Dorsolateral prefrontal cortex (tissue), 120 donors: ENCODE measurements at regions of chr12 and their contacts with region 1.

Region 1: DNA sequence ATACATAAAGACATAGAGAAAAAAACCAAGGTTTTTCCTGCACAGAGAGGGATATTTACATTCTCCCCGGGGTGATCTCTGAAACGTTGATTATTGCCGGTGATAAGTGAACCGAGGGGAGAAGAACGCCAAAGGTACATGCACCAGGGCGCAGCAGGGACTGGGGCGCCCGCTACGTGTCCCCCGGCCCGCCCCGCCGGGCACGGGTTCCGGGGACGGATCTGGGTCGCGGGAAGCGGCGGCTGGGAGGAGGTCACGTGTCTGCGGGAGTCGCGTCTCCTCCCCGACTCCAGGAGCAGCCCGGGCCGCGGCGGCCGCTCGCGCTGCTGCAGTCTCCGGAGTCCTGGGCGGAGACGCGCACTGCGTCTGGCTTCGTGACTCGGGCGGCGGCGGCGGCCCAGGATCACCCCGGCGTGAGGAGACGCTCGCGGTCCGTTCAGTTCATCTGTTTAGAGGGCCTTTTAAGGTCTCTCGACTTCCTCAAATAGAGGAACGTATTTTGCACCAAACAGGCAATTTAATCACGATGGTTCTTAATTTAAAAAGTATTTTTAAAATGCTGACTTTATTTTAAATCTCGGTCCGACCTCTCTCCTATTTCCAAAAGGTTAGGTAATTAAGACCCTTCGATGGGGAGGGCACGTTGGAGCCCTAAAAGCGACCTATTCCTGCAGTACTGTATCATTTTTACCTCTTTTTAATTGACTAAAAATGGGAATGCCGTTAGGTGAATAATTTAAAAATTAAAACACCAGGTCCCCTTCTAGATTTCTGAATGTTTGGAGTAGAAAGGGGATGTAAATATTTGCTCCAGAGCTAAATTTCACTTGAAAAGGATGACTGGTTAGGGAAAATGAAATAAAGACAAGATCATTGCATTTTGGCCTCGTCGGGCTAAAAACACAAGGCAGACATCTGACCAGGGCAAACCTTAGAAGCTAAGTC is 1.8 kb upstream of the BHLHE41 start:
- DNase-seq: peak; percentile 75 to 92 (median 86)
- H3K4me3 ChIP-seq: peak overlapping the region; percentile 47 to 93 (median 80)
- H3K27ac ChIP-seq: peak overlapping the region; percentile 84 to 100 (median 99)
- H3K27me3 ChIP-seq: no peaks in the 10 kb centered on the region
- CTCF ChIP-seq: peak in 28 of 56 donors; percentile 5 to 43 (median 21)

Region 2: GRCh38 chr12:26226629-26227360 is 100.2 kb after region 1 on chr12:
- intact Hi-C with region 1: loop called (anchors 2 to 10 kb)
- DNase-seq: peak in 9 of 10 donors; percentile 39 to 77 (median 57)
- H3K4me3 ChIP-seq: peak overlapping the region; percentile 43 to 80 (median 65)
- H3K27ac ChIP-seq: peak overlapping the region; percentile 64 to 98 (median 92)
- H3K27me3 ChIP-seq: no peaks in the 10 kb centered on the region
- CTCF ChIP-seq: peak in 11 of 56 donors; percentile 6 to 26 (median 13)

Region 3: DNA sequence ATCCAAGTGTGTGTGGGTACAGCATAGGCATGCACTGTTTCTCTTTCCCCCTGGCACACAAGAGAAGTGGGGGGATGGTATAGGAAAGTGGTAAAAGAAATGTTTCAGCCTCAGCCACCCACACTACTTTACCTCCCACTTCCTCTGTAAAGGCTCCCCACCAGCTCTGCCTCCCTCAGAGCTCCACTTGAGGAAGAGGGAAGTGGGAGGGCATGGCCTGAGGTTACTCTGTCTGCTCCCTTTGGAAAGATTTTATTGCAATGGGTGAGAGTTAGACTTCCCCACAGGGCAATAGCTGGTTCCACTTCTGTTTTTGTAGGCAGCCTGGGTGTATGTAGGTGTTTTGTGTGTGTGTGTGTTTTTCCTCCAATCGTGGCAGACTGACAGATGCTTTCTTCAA is 214.0 kb after region 1 on chr12:
- intact Hi-C with region 1: loop called (anchors 2 to 5 kb)
- DNase-seq: peak in 1 of 10 donors; percentile 30
- H3K4me3 ChIP-seq: no peak overlapping the region
- H3K27ac ChIP-seq: peak overlapping the region in 58 of 59 donors; percentile 8 to 97 (median 90)
- H3K27me3 ChIP-seq: no peaks in the 10 kb centered on the region
- CTCF ChIP-seq: no peak

Region 4: GRCh38 chr12:26523708-26524150 is 397.1 kb after region 1 on chr12:
- intact Hi-C with region 1: loop called (anchors 5 to 10 kb)
- DNase-seq: peak; percentile 77 to 97 (median 88)
- H3K4me3 ChIP-seq: peak overlapping the region in 29 of 59 donors; percentile 1 to 42 (median 18)
- H3K27ac ChIP-seq: peak overlapping the region; percentile 8 to 90 (median 78)
- H3K27me3 ChIP-seq: no peaks in the 10 kb centered on the region
- CTCF ChIP-seq: peak in 11 of 56 donors; percentile 4 to 37 (median 15)

Region 5: GRCh38 chr12:26651566-26652188 is 525.1 kb after region 1 on chr12:
- intact Hi-C with region 1: loop called (anchors 5 kb)
- DNase-seq: peak in 4 of 10 donors; percentile 8 to 58 (median 53)
- H3K4me3 ChIP-seq: no peak overlapping the region
- H3K27ac ChIP-seq: peak overlapping the region in 6 of 59 donors; percentile 5 to 60 (median 43)
- H3K27me3 ChIP-seq: no peaks in the 10 kb centered on the region
- CTCF ChIP-seq: peak; percentile 66 to 97 (median 87)